Activated T-helper 1 cell treated with anti-CD3 and anti-CD28 coated beads, Interleukin-12 subunit alpha, Interleukin-12 subunit beta, Interleukin-2, Interleukin-4 antibody, amounts not matched to agents 30 ng/mL and 10 ng/mL and 1 ng/mL, durations not matched to agents 14 hours and 24 hours and 36 hours (primary cell): ENCODE measurements at regions of chr2 and their contacts with region 1.

Region 1: DNA sequence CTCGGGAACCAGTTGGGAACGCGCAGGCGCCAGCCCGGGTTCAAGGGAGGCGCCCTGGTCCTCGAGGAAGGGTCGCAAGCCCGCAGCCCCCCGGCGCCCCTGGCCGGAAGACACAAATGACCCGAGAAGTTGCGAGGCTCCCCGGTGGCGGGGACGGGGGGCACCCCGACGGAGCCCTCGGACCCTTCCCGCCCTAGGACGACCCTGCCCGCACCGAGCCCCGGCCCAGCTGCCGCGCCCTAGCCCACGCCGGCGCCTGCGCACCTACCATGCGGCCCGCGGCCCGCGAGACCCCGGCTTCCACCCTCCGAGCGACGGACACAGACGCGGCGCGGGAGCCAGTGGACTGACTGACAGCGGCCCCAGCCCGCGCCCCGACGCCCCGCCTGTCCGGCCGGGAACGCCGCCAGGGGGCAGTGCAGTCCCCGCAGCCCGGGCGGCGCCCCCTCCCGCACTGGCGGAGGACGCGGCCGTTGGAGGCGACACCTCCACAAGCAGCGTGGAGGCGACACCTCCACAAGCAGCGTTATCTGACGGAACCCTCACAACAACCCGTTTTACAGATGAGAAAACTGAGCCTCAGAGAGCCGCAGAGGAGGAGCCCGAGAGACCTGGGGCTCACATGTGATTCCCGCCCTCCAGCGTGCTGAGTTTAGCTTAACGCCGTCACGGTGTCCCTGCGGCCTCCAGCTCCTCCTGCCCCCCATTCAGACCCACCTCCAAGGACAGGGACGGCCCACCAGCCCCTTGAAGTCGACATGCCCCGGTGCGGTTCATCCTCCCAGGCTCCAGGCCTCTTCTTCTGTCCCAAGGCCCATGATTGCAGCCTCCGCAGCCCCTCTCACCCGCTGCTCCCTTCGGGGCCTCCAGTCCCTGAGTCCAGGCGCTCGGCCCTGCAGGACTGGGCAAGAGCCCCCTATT is at the start of gene NMUR1:
- DNase-seq: peak; percentile 70
- H3K4me3 Mint-ChIP-seq: no peak within 1 kb of the TSS
- H3K27ac Mint-ChIP-seq: peak within 1 kb of the TSS; percentile 6
- H3K4me1 Mint-ChIP-seq: peaks cover 20% of the 10 kb centered on the region
- H3K27me3 Mint-ChIP-seq: peaks cover 26% of the 10 kb centered on the region
- total RNA-seq, gene NMUR1: 0.05 TPM in 1 of 2 replicates, not detected in the other

Region 2: GRCh38 chr2:230987137-230988020 is 543.0 kb before region 1 on chr2:
- intact Hi-C with region 1: no loop called
- DNase-seq: peak; percentile 68
- H3K4me3 Mint-ChIP-seq: peak overlapping the region; percentile 26
- H3K27ac Mint-ChIP-seq: no peak overlapping the region
- H3K4me1 Mint-ChIP-seq: peaks cover 35% of the 10 kb centered on the region
- H3K27me3 Mint-ChIP-seq: peaks cover 39% of the 10 kb centered on the region

Region 3: GRCh38 chr2:231482806-231483391 is 47.5 kb before region 1 on chr2:
- intact Hi-C with region 1: loop called (anchors 1 kb)
- DNase-seq: peak; percentile 66
- H3K4me3 Mint-ChIP-seq: peak overlapping the region; percentile 77
- H3K27ac Mint-ChIP-seq: peak overlapping the region; percentile 86
- H3K4me1 Mint-ChIP-seq: peaks cover 6% of the 10 kb centered on the region
- H3K27me3 Mint-ChIP-seq: peaks cover 2% of the 10 kb centered on the region